Psoas muscle (tissue), 8 donors: ENCODE measurements at regions of chr12 and their contacts with region 1.

Region 1: GRCh38 chr12:123601602-123602489 is at the start of gene DDX55:
- DNase-seq: peak; percentile 84 to 94
- ATAC-seq: peak; percentile 98 to 99 (median 99)
- H3K4me3 ChIP-seq: peak within 1 kb of the TSS; percentile 73
- H3K27ac ChIP-seq: peak within 1 kb of the TSS; percentile 84
- H3K4me1 ChIP-seq: peaks cover 14% of the 10 kb centered on the region
- H3K27me3 ChIP-seq: no peaks in the 10 kb centered on the region
- CTCF ChIP-seq: peak; percentile 59
- total RNA-seq, gene DDX55: 5.1 to 8.0 (median 6.1) TPM

Region 2: DNA sequence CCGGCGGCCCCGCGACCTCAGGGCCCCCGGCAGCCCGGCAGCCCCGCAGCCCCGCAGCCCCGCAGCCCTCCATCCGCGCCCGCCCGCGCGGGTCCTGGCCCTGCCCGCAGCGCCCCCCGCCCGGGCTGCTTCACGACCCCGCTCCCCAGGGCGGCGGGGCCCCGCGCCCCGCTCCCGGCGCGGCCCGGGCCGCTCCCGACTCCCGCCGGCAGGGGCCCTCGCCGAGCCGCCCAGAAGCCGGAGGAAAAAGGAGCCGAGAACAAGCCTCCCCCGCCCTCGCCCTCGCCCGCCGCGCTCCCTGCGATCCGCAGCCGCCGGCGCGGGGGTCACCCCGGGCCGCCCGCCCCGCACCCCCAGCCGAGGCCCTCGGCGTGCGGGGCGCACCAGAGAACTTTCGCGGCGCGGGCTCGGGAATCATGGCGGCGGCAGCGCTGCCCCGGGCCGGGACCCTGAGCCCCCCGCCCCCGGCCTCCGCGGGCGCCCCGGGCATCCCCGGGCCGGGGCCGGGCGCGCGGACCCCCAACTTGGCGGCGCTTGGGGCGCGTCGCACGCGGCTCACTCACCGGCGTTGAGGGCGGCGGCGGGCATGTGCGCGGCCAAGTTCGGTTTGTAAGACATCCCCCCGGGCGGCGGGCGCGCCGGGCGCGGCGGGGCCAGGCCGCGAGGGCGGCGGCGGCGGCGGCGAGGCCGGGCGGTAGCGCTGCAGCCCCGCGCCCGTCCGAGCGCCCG is 330.7 kb before region 1 on chr12:
- intact Hi-C with region 1: loop called in 1 of 2 experiments (anchors 2 kb)
- DNase-seq: peak; percentile 82 to 89
- ATAC-seq: peak; percentile 63 to 84 (median 79)
- H3K4me3 ChIP-seq: peak overlapping the region; percentile 62
- H3K27ac ChIP-seq: peak overlapping the region; percentile 69
- H3K4me1 ChIP-seq: peaks cover 27% of the 10 kb centered on the region
- H3K27me3 ChIP-seq: no peaks in the 10 kb centered on the region
- CTCF ChIP-seq: peak; percentile 73